ENCODE measurements at regions of chr21 and their contacts with region 1.

Region 1: GRCh38 chr21:38805328-38806152 is at the start of gene ETS2:
- DNase-seq: peak; percentile 89 to 93 (median 92)
- H3K4me3 ChIP-seq: peak within 1 kb of the TSS; percentile 97
- H3K27ac ChIP-seq: peak within 1 kb of the TSS; percentile 93 to 96
- H3K4me1 ChIP-seq: peaks cover 4% of the 10 kb centered on the region
- H3K27me3 ChIP-seq: no peaks in the 10 kb centered on the region
- CTCF ChIP-seq: no peak
- EP300 ChIP-seq: no peak
- POLR2A ChIP-seq: peak; percentile 89
- total RNA-seq, gene ETS2: 57.5 to 152 (median 79.6) TPM

Region 2: GRCh38 chr21:38733973-38734546 is 71.5 kb before region 1 on chr21:
- intact Hi-C with region 1: loop called in 2 of 4 experiments (anchors 10 kb)
- DNase-seq: peak; percentile 84 to 95 (median 93)
- H3K4me3 ChIP-seq: peak overlapping the region; percentile 36
- H3K27ac ChIP-seq: peak overlapping the region; percentile 13 to 63
- H3K4me1 ChIP-seq: no peaks in the 10 kb centered on the region
- H3K27me3 ChIP-seq: no peaks in the 10 kb centered on the region
- CTCF ChIP-seq: peak; percentile 90 to 94 (median 92)
- EP300 ChIP-seq: no peak
- POLR2A ChIP-seq: no peak

Region 3: DNA sequence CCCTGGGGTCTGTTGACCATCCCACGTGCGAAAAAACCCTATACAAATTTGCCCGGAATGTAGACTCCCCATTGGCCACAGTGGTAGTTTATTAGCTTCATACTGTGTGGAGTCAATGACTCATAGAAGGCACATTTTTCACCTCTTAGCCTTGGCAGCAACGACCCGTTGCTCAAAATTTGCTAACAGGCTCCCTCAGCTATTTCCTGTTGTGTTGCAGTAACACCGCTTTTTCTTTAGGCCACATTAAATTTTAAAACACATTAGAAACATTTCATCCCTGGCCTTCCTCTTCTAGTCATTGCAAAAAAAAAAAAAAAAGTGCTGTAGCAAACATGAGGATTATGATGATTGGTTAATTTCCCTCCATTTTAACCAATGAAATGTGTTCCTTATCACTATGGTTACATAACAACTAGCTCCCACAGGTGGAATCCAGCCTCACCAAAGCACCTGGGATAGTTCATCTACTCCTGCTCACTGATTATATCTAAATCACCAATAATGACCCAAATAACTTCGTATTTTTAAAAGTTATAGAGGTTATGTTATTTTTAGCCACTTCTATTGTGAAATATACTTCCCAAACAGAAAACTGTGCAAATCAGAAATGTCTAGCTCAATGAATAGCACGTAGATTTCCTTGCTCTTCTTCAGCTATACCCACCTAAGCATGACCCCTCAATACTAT is 49.7 kb before region 1 on chr21:
- intact Hi-C with region 1: loop called in 1 of 4 experiments (anchors 10 kb)
- DNase-seq: peak; percentile 59 to 83 (median 65)
- H3K4me3 ChIP-seq: no peak overlapping the region
- H3K27ac ChIP-seq: peak overlapping the region; percentile 31 to 68
- H3K4me1 ChIP-seq: peaks cover 11% of the 10 kb centered on the region
- H3K27me3 ChIP-seq: no peaks in the 10 kb centered on the region
- CTCF ChIP-seq: no peak
- EP300 ChIP-seq: peak; percentile 3
- POLR2A ChIP-seq: no peak

Region 4: DNA sequence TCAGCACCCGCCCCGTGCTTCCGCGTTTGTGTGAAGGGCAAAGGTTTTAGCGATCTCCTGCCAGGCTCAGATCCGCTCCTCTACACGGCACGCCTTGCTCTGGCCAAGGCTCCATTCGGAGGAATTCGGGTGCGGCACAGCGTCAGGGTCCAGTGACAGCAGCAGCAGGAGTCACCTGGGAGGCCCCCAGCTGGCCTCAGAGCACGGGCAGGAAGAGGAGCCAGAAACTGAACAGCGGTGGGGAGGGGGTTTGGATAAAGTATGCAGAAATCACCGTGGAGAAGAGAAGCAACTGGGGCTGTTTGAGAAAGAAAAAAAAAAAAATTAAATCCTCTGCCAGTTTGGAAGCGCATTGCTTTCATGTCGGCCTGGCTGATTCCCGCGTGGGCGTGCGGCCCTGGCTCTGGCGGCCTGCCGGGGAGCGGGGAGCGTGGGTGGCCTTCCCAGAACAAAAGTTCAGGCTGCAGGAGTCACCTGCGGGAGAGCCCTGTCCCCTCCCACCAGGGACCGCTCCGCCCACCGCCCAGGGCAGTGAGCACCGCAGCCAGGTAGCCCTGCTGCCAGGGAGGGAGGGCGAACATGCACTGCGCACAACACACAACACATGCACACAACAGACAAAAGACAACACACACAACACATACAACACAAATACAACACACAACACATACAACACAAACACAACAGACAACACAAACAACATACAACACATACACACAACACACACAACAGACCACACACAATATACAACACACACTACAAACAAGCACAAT is 107.8 kb after region 1 on chr21:
- intact Hi-C with region 1: loop called (anchors 5 to 10 kb)
- DNase-seq: peak; percentile 87 to 91 (median 90)
- H3K4me3 ChIP-seq: peak overlapping the region; percentile 26
- H3K27ac ChIP-seq: peak overlapping the region; percentile 77 to 81
- H3K4me1 ChIP-seq: peaks cover 19% of the 10 kb centered on the region
- H3K27me3 ChIP-seq: no peaks in the 10 kb centered on the region
- CTCF ChIP-seq: no peak
- EP300 ChIP-seq: no peak
- POLR2A ChIP-seq: peak; percentile 17

Region 5: GRCh38 chr21:39004634-39005501 is 199.3 kb after region 1 on chr21:
- intact Hi-C with region 1: loop called in 1 of 4 experiments (anchors 10 kb)
- DNase-seq: peak in 4 of 5 donors; percentile 57 to 74 (median 61)
- H3K4me3 ChIP-seq: no peak overlapping the region
- H3K27ac ChIP-seq: peak overlapping the region; percentile 11 to 48
- H3K4me1 ChIP-seq: peaks cover 12% of the 10 kb centered on the region
- H3K27me3 ChIP-seq: no peaks in the 10 kb centered on the region
- CTCF ChIP-seq: no peak
- EP300 ChIP-seq: no peak
- POLR2A ChIP-seq: no peak

Region 6: DNA sequence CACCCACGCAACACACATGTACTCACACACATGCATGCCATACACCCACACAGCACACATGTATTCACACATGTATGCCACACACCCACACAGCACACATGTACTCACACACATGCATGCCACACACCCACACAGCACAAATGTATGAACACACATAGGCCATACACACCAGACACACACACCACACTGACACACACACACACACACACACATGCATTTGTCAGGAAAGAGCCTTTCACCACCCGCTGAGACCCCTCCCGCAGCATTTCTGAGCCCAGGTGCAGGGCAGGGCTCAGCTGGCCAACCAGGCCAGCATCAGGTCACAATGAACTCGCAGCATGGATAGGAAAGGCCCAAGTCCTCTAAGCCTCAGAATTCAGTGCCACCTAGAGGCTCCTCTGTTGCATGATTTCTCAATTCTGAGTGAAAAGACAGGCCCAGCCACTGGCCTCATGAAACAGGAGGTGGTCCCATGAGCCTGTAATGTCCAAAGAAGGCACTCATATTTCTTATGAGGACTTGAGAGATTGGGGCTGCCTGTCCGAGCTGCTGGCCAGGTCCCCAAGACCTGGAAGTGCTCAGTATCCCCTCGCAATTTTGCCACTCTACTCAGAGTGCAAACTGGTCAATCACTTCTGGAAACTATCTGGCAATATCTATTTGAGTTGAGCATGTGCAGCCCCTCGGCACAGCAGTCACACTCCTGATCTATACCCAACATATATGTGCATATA is 320.4 kb after region 1 on chr21:
- intact Hi-C with region 1: loop called in 2 of 4 experiments (anchors 5 to 10 kb)
- DNase-seq: peak; percentile 47 to 64 (median 51)
- H3K4me3 ChIP-seq: no peak overlapping the region
- H3K27ac ChIP-seq: no peak overlapping the region
- H3K4me1 ChIP-seq: no peaks in the 10 kb centered on the region
- H3K27me3 ChIP-seq: no peaks in the 10 kb centered on the region
- CTCF ChIP-seq: peak in 2 of 3 donors; percentile 47 to 79
- EP300 ChIP-seq: no peak
- POLR2A ChIP-seq: no peak